ENCODE measurements at regions of chr10 and their contacts with region 1.

Region 1: GRCh38 chr10:123559066-123559822 is 106.9 kb upstream of the GPR26 start:
- DNase-seq: peak; percentile 71
- ATAC-seq: peak; percentile 67
- H3K4me3 ChIP-seq: no peak overlapping the region
- H3K4me3 Mint-ChIP-seq: no peak overlapping the region
- H3K27ac ChIP-seq: no peak overlapping the region
- H3K27ac Mint-ChIP-seq: no peak overlapping the region
- H3K4me1 ChIP-seq: peaks cover 3 to 5% of the 10 kb centered on the region in 2 donors
- H3K4me1 Mint-ChIP-seq: no peaks in the 10 kb centered on the region
- H3K27me3 ChIP-seq: peaks cover 0 to 9% (median 0%) of the 10 kb centered on the region in 4 experiments
- H3K27me3 Mint-ChIP-seq: peaks cover 15% of the 10 kb centered on the region
- CTCF ChIP-seq: peak; percentile 98

Region 2: GRCh38 chr10:122331615-122332446 is 1227.4 kb before region 1 on chr10:
- CTCF ChIA-PET with region 1: no interaction called
- POLR2A ChIA-PET with region 1: no interaction called
- intact Hi-C with region 1: no loop called
- DNase-seq: no peak
- ATAC-seq: no peak
- H3K4me3 ChIP-seq: no peak overlapping the region
- H3K4me3 Mint-ChIP-seq: no peak overlapping the region
- H3K27ac ChIP-seq: no peak overlapping the region
- H3K27ac Mint-ChIP-seq: no peak overlapping the region
- H3K4me1 ChIP-seq: peaks cover 11 to 22% of the 10 kb centered on the region in 2 donors
- H3K4me1 Mint-ChIP-seq: peaks cover 9% of the 10 kb centered on the region
- H3K27me3 ChIP-seq: peaks cover 0 to 11% (median 0%) of the 10 kb centered on the region in 4 experiments
- H3K27me3 Mint-ChIP-seq: peaks cover 43% of the 10 kb centered on the region
- CTCF ChIP-seq: no peak

Region 3: DNA sequence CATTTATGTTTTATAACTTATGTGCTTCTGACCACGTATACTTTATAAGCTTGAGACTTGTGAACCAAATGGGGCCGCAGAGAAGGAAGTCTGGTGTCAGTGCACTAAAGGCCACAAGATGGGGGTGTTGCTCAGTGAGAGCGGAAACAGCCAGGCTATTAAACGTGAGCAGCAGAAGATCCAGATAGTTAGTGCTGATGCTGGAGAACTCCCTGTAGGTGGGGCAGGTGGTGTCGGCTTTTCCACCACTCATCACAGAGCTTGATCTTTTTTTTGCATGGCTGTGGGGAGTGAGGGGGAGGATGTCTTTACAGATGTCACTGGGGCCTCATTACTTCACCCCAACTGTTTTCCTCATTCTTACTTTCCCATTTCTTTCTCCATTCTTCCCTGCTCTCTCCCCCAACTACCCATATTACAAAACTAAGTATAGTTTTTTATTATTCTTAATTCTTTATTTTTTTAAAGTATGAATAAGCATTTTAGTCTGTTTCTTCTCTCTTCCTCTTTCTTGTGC is 515.8 kb before region 1 on chr10:
- CTCF ChIA-PET with region 1: interaction called, 71 read pairs
- POLR2A ChIA-PET with region 1: no interaction called
- intact Hi-C with region 1: no loop called
- DNase-seq: peak; percentile 63
- ATAC-seq: peak; percentile 62
- H3K4me3 ChIP-seq: no peak overlapping the region
- H3K4me3 Mint-ChIP-seq: no peak overlapping the region
- H3K27ac ChIP-seq: no peak overlapping the region
- H3K27ac Mint-ChIP-seq: no peak overlapping the region
- H3K4me1 ChIP-seq: no peaks in the 10 kb centered on the region
- H3K4me1 Mint-ChIP-seq: peaks cover 3% of the 10 kb centered on the region
- H3K27me3 ChIP-seq: no peaks in the 10 kb centered on the region
- H3K27me3 Mint-ChIP-seq: no peaks in the 10 kb centered on the region
- CTCF ChIP-seq: peak; percentile 79

Region 4: GRCh38 chr10:123132576-123133477 is 426.4 kb before region 1 on chr10:
- CTCF ChIA-PET with region 1: interaction called, 32 read pairs
- POLR2A ChIA-PET with region 1: no interaction called
- intact Hi-C with region 1: no loop called
- DNase-seq: peak; percentile 84
- ATAC-seq: peak; percentile 66
- H3K4me3 ChIP-seq: peak overlapping the region in 2 of 5 experiments; percentile 11 to 28
- H3K4me3 Mint-ChIP-seq: peak overlapping the region; percentile 84
- H3K27ac ChIP-seq: no peak overlapping the region
- H3K27ac Mint-ChIP-seq: peak overlapping the region; percentile 84
- H3K4me1 ChIP-seq: peaks cover 48 to 52% of the 10 kb centered on the region in 2 donors
- H3K4me1 Mint-ChIP-seq: peaks cover 32% of the 10 kb centered on the region
- H3K27me3 ChIP-seq: peaks cover 0 to 88% (median 70%) of the 10 kb centered on the region in 4 experiments
- H3K27me3 Mint-ChIP-seq: peaks cover 69% of the 10 kb centered on the region
- CTCF ChIP-seq: peak; percentile 85

Region 5: GRCh38 chr10:123413353-123413752 is 145.9 kb before region 1 on chr10:
- CTCF ChIA-PET with region 1: no interaction called
- POLR2A ChIA-PET with region 1: no interaction called
- intact Hi-C with region 1: no loop called
- DNase-seq: no peak
- ATAC-seq: no peak
- H3K4me3 ChIP-seq: no peak overlapping the region
- H3K4me3 Mint-ChIP-seq: no peak overlapping the region
- H3K27ac ChIP-seq: no peak overlapping the region
- H3K27ac Mint-ChIP-seq: no peak overlapping the region
- H3K4me1 ChIP-seq: no peaks in the 10 kb centered on the region
- H3K4me1 Mint-ChIP-seq: no peaks in the 10 kb centered on the region
- H3K27me3 ChIP-seq: no peaks in the 10 kb centered on the region
- H3K27me3 Mint-ChIP-seq: peaks cover 11% of the 10 kb centered on the region
- CTCF ChIP-seq: no peak

Region 6: DNA sequence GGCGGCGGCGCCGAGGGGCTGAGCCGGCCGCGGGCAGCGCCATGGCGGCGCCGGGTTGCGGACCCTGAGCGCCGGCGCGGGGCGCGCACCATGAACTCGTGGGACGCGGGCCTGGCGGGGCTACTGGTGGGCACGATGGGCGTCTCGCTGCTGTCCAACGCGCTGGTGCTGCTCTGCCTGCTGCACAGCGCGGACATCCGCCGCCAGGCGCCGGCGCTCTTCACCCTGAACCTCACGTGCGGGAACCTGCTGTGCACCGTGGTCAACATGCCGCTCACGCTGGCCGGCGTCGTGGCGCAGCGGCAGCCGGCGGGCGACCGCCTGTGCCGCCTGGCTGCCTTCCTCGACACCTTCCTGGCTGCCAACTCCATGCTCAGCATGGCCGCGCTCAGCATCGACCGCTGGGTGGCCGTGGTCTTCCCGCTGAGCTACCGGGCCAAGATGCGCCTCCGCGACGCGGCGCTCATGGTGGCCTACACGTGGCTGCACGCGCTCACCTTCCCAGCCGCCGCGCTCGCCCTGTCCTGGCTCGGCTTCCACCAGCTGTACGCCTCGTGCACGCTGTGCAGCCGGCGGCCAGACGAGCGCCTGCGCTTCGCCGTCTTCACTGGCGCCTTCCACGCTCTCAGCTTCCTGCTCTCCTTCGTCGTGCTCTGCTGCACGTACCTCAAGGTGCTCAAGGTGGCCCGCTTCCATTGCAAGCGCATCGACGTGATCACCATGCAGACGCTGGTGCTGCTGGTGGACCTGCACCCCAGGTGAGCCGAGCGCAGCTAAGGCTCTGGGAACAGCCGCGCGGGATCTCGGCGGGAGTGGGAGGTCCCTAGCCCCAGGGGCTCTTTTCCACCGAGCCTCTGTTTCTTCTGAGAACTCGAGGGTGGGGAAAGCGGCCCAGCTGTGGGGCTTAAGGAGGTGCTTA is 107.3 kb after region 1 on chr10 and contains the start of gene GPR26:
- CTCF ChIA-PET with region 1: no interaction called
- POLR2A ChIA-PET with region 1: no interaction called
- intact Hi-C with region 1: no loop called
- DNase-seq: no peak
- ATAC-seq: no peak
- H3K4me3 ChIP-seq: no peak within 1 kb of the TSS
- H3K4me3 Mint-ChIP-seq: no peak within 1 kb of the TSS
- H3K27ac ChIP-seq: no peak within 1 kb of the TSS
- H3K27ac Mint-ChIP-seq: no peak within 1 kb of the TSS
- H3K4me1 ChIP-seq: no peaks in the 10 kb centered on the region
- H3K4me1 Mint-ChIP-seq: no peaks in the 10 kb centered on the region
- H3K27me3 ChIP-seq: peaks cover 0 to 11% (median 1%) of the 10 kb centered on the region in 4 experiments
- H3K27me3 Mint-ChIP-seq: peaks cover 50% of the 10 kb centered on the region
- CTCF ChIP-seq: no peak
- total RNA-seq, gene GPR26: not detected in 2 replicates

Region 7: DNA sequence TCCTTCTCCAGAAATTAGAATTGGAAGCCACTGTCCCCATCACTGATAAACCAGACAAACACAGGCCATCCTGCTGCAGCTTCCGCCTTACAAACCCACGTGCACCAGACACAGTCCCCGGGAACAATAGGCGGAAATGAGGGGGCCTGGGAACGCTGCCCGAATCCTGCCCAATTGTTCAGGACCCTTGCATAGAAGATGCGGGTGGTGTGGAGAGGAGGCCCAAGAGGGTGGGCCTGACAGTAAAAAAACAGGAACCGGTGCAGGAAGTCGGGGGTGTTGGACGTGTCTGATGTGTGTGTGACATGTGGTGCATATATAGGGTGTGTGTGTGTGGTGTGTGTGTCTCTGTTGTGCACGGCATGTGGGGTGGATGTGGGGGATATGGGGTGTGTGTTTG is 560.7 kb after region 1 on chr10:
- CTCF ChIA-PET with region 1: no interaction called
- POLR2A ChIA-PET with region 1: no interaction called
- intact Hi-C with region 1: no loop called
- DNase-seq: peak; percentile 65
- ATAC-seq: peak; percentile 19
- H3K4me3 ChIP-seq: peak overlapping the region in 1 of 5 experiments; percentile 19
- H3K4me3 Mint-ChIP-seq: no peak overlapping the region
- H3K27ac ChIP-seq: peak overlapping the region in 1 of 2 donors; percentile 63
- H3K27ac Mint-ChIP-seq: no peak overlapping the region
- H3K4me1 ChIP-seq: peaks cover 64 to 84% of the 10 kb centered on the region in 2 donors
- H3K4me1 Mint-ChIP-seq: peaks cover 29% of the 10 kb centered on the region
- H3K27me3 ChIP-seq: no peaks in the 10 kb centered on the region
- H3K27me3 Mint-ChIP-seq: no peaks in the 10 kb centered on the region
- CTCF ChIP-seq: no peak

Measured in B cell (primary cell).